ENCODE measurements at regions of chr17 and their contacts with region 1.

Region 1: GRCh38 chr17:66399441-66399840 is 97.0 kb downstream of the PRKCA start:
- DNase-seq: peak; percentile 29
- H3K4me3 Mint-ChIP-seq: peak overlapping the region; percentile 35
- H3K27ac Mint-ChIP-seq: peak overlapping the region; percentile 82
- H3K4me1 Mint-ChIP-seq: peaks cover 83% of the 10 kb centered on the region
- H3K27me3 Mint-ChIP-seq: no peaks in the 10 kb centered on the region

Region 2: GRCh38 chr17:66331038-66331816 is 68.2 kb before region 1 on chr17:
- CTCF ChIA-PET with region 1: no interaction called
- POLR2A ChIA-PET with region 1: no interaction called
- intact Hi-C with region 1: loop called (anchors 2 kb)
- DNase-seq: peak; percentile 36
- H3K4me3 Mint-ChIP-seq: peak overlapping the region; percentile 70
- H3K27ac Mint-ChIP-seq: peak overlapping the region; percentile 92
- H3K4me1 Mint-ChIP-seq: peaks cover 79% of the 10 kb centered on the region
- H3K27me3 Mint-ChIP-seq: no peaks in the 10 kb centered on the region

Region 3: DNA sequence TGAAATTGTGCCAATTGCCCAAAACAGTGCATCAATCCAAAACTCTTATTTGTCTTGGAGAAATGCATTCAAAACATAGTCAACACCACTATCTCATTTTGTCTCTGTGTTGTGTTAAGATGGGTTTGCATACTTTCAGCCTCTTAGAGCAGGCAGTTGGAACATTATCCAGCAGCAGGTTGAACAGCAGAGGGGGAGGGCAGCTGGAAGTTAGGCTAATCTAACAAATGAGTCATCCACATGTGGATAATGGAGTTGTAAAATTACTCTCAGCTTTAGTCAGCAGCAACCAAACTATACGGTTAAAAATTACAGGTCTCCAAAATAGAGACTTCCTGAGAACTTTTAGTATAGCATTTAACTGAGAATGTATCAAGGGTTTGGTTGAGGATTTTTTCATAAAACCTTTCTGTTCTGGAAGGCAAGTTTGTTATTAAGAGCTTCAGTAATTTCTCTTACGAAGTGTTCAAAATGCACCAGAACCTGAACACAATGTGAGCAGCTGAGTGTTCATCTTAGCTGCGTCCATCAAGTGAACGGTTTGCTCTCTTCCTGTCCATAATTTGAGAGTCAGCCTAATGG is 50.8 kb before region 1 on chr17:
- CTCF ChIA-PET with region 1: no interaction called
- POLR2A ChIA-PET with region 1: no interaction called
- intact Hi-C with region 1: loop called (anchors 2 kb)
- DNase-seq: peak; percentile 58
- H3K4me3 Mint-ChIP-seq: no peak overlapping the region
- H3K27ac Mint-ChIP-seq: peak overlapping the region; percentile 47
- H3K4me1 Mint-ChIP-seq: peaks cover 78% of the 10 kb centered on the region
- H3K27me3 Mint-ChIP-seq: no peaks in the 10 kb centered on the region

Region 4: DNA sequence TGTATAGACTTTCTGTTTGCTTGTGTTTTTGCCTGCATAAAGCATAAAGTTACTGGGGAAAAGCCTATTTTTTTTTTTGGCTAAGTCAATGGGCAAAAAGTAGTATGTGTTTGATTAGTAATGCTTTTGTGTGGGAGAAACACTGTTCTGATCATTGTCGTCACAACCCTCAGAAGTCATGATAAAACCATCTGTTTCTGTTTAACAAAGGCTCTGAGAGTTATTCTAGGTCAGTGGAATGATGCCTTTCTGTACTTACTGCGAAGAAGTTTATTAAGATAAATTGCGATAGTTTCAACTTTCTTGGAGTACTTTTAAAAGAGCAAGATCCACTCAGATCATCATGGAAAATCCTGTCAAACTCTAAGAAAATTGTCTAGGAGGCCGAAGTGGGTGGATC is 16.1 kb before region 1 on chr17:
- CTCF ChIA-PET with region 1: interaction called, 3 read pairs
- POLR2A ChIA-PET with region 1: no interaction called
- intact Hi-C with region 1: loop called (anchors 2 kb)
- DNase-seq: no peak
- H3K4me3 Mint-ChIP-seq: no peak overlapping the region
- H3K27ac Mint-ChIP-seq: peak overlapping the region; percentile 40
- H3K4me1 Mint-ChIP-seq: peaks cover 66% of the 10 kb centered on the region
- H3K27me3 Mint-ChIP-seq: no peaks in the 10 kb centered on the region

Region 5: GRCh38 chr17:66420961-66421371 is 21.5 kb after region 1 on chr17:
- CTCF ChIA-PET with region 1: interaction called, 3 read pairs
- POLR2A ChIA-PET with region 1: interaction called, 3 read pairs
- intact Hi-C with region 1: loop called (anchors 1 kb)
- DNase-seq: no peak
- H3K4me3 Mint-ChIP-seq: no peak overlapping the region
- H3K27ac Mint-ChIP-seq: peak overlapping the region; percentile 50
- H3K4me1 Mint-ChIP-seq: peaks cover 77% of the 10 kb centered on the region
- H3K27me3 Mint-ChIP-seq: no peaks in the 10 kb centered on the region